HepG2 (cell line): ENCODE measurements at regions of chr1 and their contacts with region 1.

Region 1: GRCh38 chr1:247078261-247079140 is at the start of gene ZNF670:
- DNase-seq: peak; percentile 88
- ATAC-seq: peak; percentile 97
- H3K4me3 ChIP-seq: peak within 1 kb of the TSS; percentile 78 to 86 (median 82)
- H3K27ac ChIP-seq: peak within 1 kb of the TSS; percentile 90
- H3K4me1 ChIP-seq: peaks cover 40% of the 10 kb centered on the region
- H3K27me3 ChIP-seq: no peaks in the 10 kb centered on the region; a peak in 1 of 5 replicates
- CTCF ChIP-seq: peak; percentile 55
- EP300 ChIP-seq: no peak
- POLR2A ChIP-seq: peak; percentile 82 to 83
- RAD21 ChIP-seq: no peak
- total RNA-seq, gene ZNF670: 10.9 and 15.2 TPM in 2 replicates

Region 2: DNA sequence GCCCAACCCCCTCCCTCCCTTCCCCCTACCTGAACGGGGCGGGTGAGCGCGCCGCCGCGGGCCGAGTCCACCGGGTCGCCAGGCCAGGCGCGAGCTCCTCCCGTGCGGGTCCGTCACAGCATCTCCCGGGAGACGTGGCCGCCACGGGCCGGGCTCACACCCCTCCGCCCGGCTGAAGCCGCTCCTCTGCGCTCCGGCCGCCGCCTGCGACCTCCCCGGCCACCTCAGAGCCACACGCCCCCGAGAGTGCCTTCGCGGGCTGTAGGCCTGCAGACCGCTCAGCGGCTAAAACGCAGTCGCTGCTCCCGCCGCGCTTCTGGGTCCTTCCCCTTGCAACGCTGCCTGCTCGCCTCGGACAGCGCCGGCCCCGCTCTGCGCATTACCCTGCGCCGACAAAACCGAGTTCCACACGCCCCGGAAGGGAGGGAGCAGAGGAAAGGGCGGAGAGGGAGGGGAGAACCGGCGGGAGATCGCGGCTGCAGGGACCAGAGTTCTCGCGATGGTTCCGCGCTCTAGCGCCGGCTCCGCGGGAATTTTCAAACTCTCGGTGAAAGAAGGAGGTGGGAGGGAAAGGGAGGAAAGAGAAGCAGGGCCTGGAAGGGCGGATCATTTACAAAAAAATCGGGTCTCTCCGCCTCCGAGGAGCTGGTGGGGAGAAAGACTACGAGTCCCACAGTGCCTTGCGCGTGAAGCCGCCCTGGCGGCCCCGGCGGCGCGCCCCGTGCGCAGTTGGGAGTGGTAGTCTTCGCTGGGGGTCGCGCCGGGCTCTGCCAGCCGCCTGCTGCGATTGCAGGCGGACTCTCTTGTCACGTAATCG is 146.7 kb before region 1 on chr1 and contains the start of gene AHCTF1:
- CTCF ChIA-PET with region 1: no interaction called
- POLR2A ChIA-PET with region 1: no interaction called
- in situ Hi-C with region 1: no loop called
- intact Hi-C with region 1: loop called (anchors 2 kb)
- DNase-seq: peak; percentile 97
- ATAC-seq: peak; percentile 96
- H3K4me3 ChIP-seq: peak within 1 kb of the TSS; percentile 91 to 99 (median 91)
- H3K27ac ChIP-seq: peak within 1 kb of the TSS; percentile 99
- H3K4me1 ChIP-seq: peaks cover 23% of the 10 kb centered on the region
- H3K27me3 ChIP-seq: no peaks in the 10 kb centered on the region; a peak in 1 of 5 replicates
- CTCF ChIP-seq: 0 out of 2 replicates have a peak, but pooled peaks have one; percentile 19
- EP300 ChIP-seq: no peak
- POLR2A ChIP-seq: peak; percentile 96
- RAD21 ChIP-seq: no peak; the same call in 1 of the 2 replicates
- total RNA-seq, gene AHCTF1: 45.9 and 73.9 TPM in 2 replicates

Region 3: GRCh38 chr1:247007511-247008405 is 70.7 kb before region 1 on chr1 and contains the start of gene ZNF695:
- CTCF ChIA-PET with region 1: no interaction called
- POLR2A ChIA-PET with region 1: no interaction called
- in situ Hi-C with region 1: no loop called
- intact Hi-C with region 1: loop called (anchors 2 kb)
- DNase-seq: peak; percentile 97
- ATAC-seq: peak; percentile 98
- H3K4me3 ChIP-seq: peak within 1 kb of the TSS; percentile 91 to 96 (median 95)
- H3K27ac ChIP-seq: peak within 1 kb of the TSS; percentile 78
- H3K4me1 ChIP-seq: peaks cover 29% of the 10 kb centered on the region
- H3K27me3 ChIP-seq: no peaks in the 10 kb centered on the region
- CTCF ChIP-seq: no peak
- EP300 ChIP-seq: no peak
- POLR2A ChIP-seq: peak; percentile 78 to 84
- RAD21 ChIP-seq: no peak
- total RNA-seq, gene ZNF695: 11.6 and 13.2 TPM in 2 replicates

Region 4: GRCh38 chr1:247103859-247104591 is 25.5 kb after region 1 on chr1 and contains the start of gene ZNF669:
- CTCF ChIA-PET with region 1: no interaction called
- POLR2A ChIA-PET with region 1: no interaction called
- in situ Hi-C with region 1: no loop called
- intact Hi-C with region 1: loop called (anchors 1 kb)
- DNase-seq: peak; percentile 94
- ATAC-seq: peak; percentile 99
- H3K4me3 ChIP-seq: peak within 1 kb of the TSS; percentile 88 to 100 (median 96)
- H3K27ac ChIP-seq: peak within 1 kb of the TSS; percentile 97
- H3K4me1 ChIP-seq: peaks cover 23% of the 10 kb centered on the region
- H3K27me3 ChIP-seq: no peaks in the 10 kb centered on the region
- CTCF ChIP-seq: 0 out of 2 replicates have a peak, but pooled peaks have one; percentile 25
- EP300 ChIP-seq: no peak
- POLR2A ChIP-seq: peak; percentile 87 to 96
- RAD21 ChIP-seq: no peak
- total RNA-seq, gene ZNF669: 13.6 and 14.6 TPM in 2 replicates